ENCODE measurements at regions of chr9 and their contacts with region 1.

Region 1: DNA sequence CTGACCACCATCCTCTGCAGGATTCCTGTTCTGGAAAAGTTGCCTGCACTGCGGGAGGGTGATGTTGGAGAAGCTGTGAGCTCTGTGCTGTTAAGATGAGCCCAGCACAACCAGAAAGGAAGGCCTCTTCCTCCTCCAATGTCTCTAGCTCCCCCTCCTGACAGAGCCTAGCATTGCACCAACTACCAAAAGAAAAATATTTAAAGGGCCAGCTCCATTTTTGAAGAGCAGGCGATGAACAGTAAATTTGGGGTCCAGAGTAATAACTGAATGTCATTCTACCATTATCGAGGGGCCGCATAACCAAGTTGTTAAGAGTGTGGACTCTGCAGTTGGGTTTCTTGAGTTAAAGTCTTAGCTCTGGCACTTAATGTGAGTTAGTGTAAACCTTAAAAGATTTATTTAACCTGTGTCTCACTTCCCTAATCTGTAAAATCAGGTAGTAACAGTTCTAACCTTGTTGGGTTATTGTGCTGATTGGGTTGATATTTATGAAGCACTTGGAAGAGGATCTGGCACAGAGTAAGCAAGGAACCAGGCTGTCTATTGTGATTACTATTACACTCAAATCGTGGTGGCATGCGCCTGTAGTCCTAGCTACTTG is 3.9 kb downstream of the TEX53 start:
- DNase-seq: peak; percentile 91
- H3K4me3 Mint-ChIP-seq: no peak overlapping the region
- H3K27ac Mint-ChIP-seq: peak overlapping the region; percentile 43
- H3K4me1 Mint-ChIP-seq: peaks cover 24% of the 10 kb centered on the region
- H3K27me3 Mint-ChIP-seq: no peaks in the 10 kb centered on the region

Region 2: DNA sequence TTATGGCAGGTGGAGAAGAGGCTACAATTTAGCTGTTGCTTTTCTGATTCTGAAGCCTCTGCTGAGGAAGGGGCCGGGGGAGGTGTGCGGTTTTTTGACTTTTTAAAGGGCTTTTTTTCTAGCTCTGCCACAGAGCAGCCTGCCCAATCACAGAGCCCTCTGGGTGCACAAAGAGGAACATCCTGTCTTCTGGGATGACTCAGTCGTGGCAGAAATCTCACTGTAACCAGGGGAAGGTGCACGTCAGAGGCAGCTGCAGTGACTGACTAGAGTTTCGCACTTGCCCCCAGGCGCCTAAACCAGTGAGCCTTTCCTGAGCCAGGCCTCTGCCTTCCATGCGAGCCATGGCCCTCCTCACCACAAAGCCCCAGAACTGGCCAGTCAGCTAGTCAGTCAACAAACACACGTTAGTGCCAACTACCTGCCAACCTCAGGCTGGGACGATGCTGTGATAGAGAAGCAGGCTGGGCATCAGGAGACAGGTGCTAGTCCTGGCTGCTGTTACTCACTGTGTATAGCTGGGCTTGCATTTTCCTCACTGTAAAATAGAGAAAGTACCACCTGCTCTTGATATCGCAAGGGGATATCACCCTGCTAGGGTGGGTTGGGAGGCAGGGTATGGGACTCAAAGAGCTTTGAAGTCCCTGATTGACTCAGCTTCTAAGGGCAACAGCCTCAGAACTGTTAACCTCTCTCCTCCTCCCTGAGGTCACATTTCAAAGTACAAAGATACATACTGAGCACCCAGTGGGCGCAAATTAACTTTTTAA is 268.1 kb before region 1 on chr9:
- CTCF ChIA-PET with region 1: interaction called, 17 read pairs
- POLR2A ChIA-PET with region 1: no interaction called
- DNase-seq: peak; percentile 96
- H3K4me3 Mint-ChIP-seq: peak overlapping the region; percentile 99
- H3K27ac Mint-ChIP-seq: peak overlapping the region; percentile 91
- H3K4me1 Mint-ChIP-seq: peaks cover 54% of the 10 kb centered on the region
- H3K27me3 Mint-ChIP-seq: no peaks in the 10 kb centered on the region

Region 3: DNA sequence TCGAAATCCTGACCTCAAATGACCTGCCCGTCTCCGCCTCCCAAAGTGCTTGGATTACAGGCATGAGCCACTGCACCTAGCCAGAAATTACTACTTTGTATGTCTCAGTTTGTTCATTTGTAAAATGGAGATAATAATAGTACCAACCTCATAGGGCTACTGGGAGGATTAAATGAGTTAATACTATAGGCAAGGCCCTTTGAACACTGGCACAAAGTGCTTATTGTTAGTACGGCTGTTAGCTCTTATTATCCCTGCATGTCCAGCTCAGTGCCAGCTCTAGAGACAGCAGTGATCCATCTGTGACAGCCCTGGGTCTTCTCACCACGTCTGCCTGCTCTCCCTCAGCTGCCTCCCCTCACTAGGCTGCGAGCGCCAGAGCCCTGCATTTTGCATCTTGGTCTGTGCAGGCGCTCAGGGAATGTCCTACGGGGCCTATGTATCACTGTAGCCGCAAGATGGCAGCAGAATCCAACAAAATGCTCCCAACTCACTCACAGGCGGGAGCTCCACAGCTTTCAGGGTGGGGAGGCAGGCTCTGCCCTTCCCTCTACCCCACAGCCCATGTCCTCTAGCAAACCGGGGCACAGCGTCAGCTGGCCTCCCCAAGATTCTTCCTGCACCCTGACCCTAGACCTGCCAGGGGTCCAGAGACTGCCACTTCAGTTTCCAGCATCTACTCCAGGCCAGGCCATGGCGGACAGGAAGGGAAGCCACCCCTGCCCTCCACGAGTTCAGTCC is 248.2 kb before region 1 on chr9:
- CTCF ChIA-PET with region 1: interaction called, 80 read pairs
- POLR2A ChIA-PET with region 1: interaction called, 6 read pairs
- DNase-seq: peak; percentile 87
- H3K4me3 Mint-ChIP-seq: no peak overlapping the region
- H3K27ac Mint-ChIP-seq: peak overlapping the region; percentile 70
- H3K4me1 Mint-ChIP-seq: peaks cover 17% of the 10 kb centered on the region
- H3K27me3 Mint-ChIP-seq: no peaks in the 10 kb centered on the region

Region 4: DNA sequence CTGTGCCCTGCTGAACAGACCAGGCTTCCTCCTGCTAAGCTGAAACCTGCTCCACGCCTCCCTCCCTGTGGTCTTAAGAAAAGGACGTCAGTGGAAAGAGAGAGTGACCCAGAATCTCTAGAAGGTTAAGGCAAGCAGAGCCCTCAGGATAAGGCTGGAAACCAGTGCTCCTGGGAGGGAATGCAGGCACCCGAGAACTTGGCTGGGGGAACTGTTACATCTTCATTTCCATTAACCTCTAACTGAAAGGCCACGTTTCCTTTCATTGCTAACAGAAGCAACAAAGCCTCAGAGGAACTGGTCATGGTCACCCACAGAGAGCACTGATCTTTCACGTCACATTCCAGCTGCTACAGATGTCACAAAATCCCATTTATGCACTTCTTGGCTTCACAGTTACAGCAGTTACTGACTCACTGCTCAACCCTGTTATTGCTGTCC is 239.8 kb before region 1 on chr9:
- CTCF ChIA-PET with region 1: interaction called, 14 read pairs
- POLR2A ChIA-PET with region 1: no interaction called
- DNase-seq: no peak
- H3K4me3 Mint-ChIP-seq: no peak overlapping the region
- H3K27ac Mint-ChIP-seq: no peak overlapping the region
- H3K4me1 Mint-ChIP-seq: peaks cover 23% of the 10 kb centered on the region
- H3K27me3 Mint-ChIP-seq: no peaks in the 10 kb centered on the region

Region 5: GRCh38 chr9:114434878-114435311 is 218.8 kb before region 1 on chr9:
- CTCF ChIA-PET with region 1: interaction called, 12 read pairs
- POLR2A ChIA-PET with region 1: no interaction called
- DNase-seq: no peak
- H3K4me3 Mint-ChIP-seq: no peak overlapping the region
- H3K27ac Mint-ChIP-seq: no peak overlapping the region
- H3K4me1 Mint-ChIP-seq: peaks cover 7% of the 10 kb centered on the region
- H3K27me3 Mint-ChIP-seq: peaks cover 6% of the 10 kb centered on the region

Region 6: DNA sequence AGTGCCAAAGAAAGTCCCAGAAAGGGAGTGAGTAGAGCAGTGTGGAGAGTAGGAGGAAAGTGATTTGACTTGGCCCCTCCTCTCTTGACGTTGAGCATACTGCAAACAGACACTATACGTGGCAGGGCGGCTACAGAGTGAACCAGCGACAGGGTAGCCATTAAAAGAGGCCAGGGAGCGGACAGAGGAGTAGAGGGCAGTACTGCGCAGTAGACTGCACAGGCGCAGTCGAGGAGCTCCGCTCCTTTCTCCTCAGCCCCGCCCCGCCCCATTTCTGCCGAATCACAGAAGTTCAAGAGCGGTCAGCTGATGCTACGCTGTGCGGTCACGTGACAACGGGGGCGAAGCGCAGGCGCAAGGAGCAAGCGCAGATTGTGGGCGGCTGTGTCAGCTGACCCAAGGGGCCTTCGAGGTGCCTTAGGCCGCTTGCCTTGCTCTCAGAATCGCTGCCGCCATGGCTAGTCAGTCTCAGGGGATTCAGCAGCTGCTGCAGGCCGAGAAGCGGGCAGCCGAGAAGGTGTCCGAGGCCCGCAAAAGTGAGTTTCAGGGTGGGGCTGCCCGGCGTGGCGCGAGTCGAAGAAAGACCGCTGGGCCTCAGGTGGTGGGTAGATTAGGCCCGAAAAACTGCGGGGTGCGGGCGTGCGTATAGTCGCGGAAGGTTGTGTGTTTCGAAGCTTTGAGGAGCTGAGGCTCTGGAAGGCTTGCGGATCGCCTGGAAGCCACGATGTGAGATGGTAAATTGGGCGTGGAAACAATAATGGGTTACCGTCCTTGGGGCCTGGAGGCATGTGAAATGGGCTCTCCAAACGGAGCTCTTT is 66.1 kb before region 1 on chr9 and contains the start of gene ATP6V1G1:
- CTCF ChIA-PET with region 1: interaction called, 20 read pairs
- POLR2A ChIA-PET with region 1: interaction called, 4 read pairs
- DNase-seq: peak; percentile 100
- H3K4me3 Mint-ChIP-seq: peak within 1 kb of the TSS; percentile 99
- H3K27ac Mint-ChIP-seq: peak within 1 kb of the TSS; percentile 97
- H3K4me1 Mint-ChIP-seq: peaks cover 49% of the 10 kb centered on the region
- H3K27me3 Mint-ChIP-seq: peaks cover 2% of the 10 kb centered on the region
- total RNA-seq, gene ATP6V1G1: 89.0 to 94.8 TPM

Region 7: GRCh38 chr9:114641967-114642366 is 11.7 kb before region 1 on chr9:
- CTCF ChIA-PET with region 1: interaction called, 25 read pairs
- POLR2A ChIA-PET with region 1: no interaction called
- DNase-seq: no peak
- H3K4me3 Mint-ChIP-seq: no peak overlapping the region
- H3K27ac Mint-ChIP-seq: no peak overlapping the region
- H3K4me1 Mint-ChIP-seq: peaks cover 2% of the 10 kb centered on the region
- H3K27me3 Mint-ChIP-seq: no peaks in the 10 kb centered on the region

Measured in activated CD4-positive, alpha-beta T cell treated with anti-CD3 and anti-CD28 coated beads, Interleukin-2, amount 10 ng/mL, durations not matched to agents 7 days and 5 days (primary cell).